ENCODE measurements at regions of chr10 and their contacts with region 1.

Region 1: DNA sequence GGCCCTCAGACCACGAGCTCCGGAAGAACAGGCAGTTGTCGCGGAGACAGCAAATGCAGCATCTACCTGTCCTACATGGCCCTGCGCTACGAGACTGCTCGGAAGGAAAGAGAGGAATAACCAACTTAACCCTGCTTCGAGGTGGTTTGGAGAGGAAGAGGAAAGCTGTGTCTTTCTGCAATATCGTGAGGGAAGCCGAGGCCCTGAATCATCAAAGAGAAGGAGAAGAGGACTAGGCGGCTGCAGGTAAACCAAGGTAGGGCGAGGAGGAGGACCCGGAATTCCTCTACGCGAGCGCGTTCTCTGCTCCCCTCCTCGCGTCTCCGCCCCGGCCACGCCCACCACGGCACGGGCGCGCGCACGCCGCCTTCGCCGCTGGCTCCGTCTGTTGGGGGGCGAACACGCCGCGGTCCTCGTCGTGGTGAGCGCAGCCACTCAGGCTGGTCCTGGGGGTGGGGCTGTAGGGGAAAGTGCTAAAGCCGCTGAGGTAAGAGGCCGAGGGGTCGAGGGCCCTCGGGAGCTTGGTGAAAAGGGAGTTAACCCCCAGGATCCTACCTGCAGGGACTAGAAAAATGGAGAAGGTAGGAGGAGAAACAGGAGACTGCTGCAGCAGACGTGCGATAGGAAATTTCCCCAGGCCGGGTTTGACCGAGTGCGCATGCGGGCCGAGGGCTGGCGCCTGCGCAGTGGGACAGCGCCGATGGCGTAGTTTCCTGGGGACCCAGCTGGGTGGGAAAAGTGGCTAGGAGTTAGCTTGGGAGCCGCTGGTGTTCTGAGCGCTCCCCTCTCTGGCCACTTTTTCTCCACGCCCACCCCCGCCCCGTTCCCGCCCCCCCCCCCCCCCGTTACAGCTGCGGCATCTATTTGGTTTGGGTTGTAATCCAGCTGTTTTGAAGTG is at the starts of genes ANAPC16 and ASCC1:
- DNase-seq: peak; percentile 96
- ATAC-seq: peak; percentile 98
- total RNA-seq, gene ANAPC16: 239 TPM
- total RNA-seq, gene ASCC1: 35.4 TPM

Region 2: GRCh38 chr10:72122221-72122620 is 93.7 kb before region 1 on chr10:
- intact Hi-C with region 1: no loop called
- DNase-seq: no peak
- ATAC-seq: no peak

Region 3: DNA sequence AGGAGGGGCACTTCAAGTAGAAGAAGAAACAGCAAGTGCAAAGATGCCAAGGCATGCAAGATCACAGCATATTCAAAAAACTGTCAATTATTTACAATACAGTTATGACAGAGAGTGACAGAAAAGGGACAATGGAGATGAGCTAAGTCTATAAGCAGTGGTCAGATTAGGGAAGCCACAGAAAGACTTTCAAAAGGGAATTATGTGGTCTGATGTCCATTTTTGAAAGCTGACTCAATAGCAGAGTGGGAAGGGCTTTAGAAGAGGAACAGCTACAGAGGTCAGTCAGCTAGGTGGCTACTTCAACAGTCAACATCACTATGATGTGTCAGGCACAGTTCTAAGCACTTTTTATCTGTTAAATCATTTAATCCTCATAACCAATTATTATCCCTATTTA is 82.4 kb before region 1 on chr10:
- intact Hi-C with region 1: loop called (anchors 5 kb)
- DNase-seq: no peak
- ATAC-seq: peak; percentile 46

Region 4: GRCh38 chr10:72173635-72174296 is 42.1 kb before region 1 on chr10:
- intact Hi-C with region 1: loop called (anchors 5 kb)
- DNase-seq: no peak
- ATAC-seq: no peak